ENCODE measurements at regions of chr4 and their contacts with region 1.

Region 1: GRCh38 chr4:145168581-145169187 is 11.7 kb downstream of the OTUD4 start:
- DNase-seq: no peak
- H3K4me3 ChIP-seq: no peak overlapping the region
- H3K27ac ChIP-seq: no peak overlapping the region
- H3K4me1 ChIP-seq: no peaks in the 10 kb centered on the region
- H3K27me3 ChIP-seq: no peaks in the 10 kb centered on the region
- CTCF ChIP-seq: no peak

Region 2: DNA sequence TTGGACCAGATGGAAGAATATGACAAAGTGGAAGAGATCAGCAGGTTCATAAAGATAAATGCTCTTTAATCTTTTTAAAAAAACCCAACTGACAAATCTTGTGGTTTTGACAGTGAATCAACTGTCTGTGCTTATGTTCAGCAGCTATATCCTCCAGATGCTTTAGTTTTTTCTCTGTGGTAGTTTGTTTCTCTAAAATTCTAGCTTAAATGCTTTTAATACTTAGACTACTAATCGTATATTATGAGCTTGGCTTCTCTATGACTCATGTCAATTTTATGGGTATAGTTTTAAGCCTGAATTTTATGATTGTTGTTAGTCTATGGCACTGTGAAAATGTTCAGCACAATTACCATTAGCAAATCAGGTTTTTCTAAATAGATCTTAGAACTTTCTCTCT is 509.8 kb before region 1 on chr4:
- intact Hi-C with region 1: no loop called
- DNase-seq: no peak
- H3K4me3 ChIP-seq: no peak overlapping the region
- H3K27ac ChIP-seq: no peak overlapping the region
- H3K4me1 ChIP-seq: no peaks in the 10 kb centered on the region
- H3K27me3 ChIP-seq: no peaks in the 10 kb centered on the region
- CTCF ChIP-seq: no peak

Region 3: DNA sequence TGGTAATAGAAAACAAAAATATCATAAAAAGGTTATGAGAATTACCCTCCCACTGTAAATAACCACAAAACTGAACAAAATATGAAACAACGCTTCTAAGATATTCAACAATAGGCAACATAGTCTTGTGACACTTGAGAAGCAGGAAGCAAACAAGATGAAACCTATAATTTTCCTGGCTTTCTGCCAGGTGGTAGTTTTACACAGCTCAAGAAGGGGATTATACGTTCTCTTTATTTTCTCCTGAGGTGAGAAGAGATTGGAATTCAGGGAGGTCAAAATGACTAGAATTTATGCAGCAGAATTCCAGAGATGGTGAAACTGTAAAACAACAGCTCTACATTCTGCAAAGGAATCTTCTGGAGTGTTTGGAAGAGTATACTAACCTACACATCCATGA is 336.7 kb before region 1 on chr4:
- intact Hi-C with region 1: no loop called
- DNase-seq: no peak
- H3K4me3 ChIP-seq: no peak overlapping the region
- H3K27ac ChIP-seq: no peak overlapping the region
- H3K4me1 ChIP-seq: no peaks in the 10 kb centered on the region
- H3K27me3 ChIP-seq: no peaks in the 10 kb centered on the region
- CTCF ChIP-seq: no peak

Region 4: DNA sequence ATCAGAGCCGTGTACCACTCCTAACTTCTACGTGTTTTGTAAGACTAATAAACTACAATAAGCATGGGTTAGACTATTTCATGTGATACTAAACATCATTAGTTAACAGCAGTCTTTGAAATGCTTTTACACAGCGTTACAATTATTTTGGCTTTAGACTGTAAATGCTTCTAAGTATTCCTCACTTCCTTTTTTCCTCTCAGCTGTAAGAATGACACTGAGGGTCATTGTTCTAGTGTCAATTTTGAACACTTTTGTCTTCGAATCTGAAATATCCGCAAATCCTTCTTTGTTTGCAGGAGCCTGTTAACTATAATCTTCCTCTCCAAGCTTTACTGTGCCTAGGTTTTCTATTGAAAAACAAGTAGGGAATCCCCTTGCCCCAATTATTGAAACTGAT is 69.0 kb before region 1 on chr4:
- intact Hi-C with region 1: loop called (anchors 10 kb)
- DNase-seq: no peak
- H3K4me3 ChIP-seq: no peak overlapping the region
- H3K27ac ChIP-seq: no peak overlapping the region
- H3K4me1 ChIP-seq: peaks cover 7% of the 10 kb centered on the region
- H3K27me3 ChIP-seq: no peaks in the 10 kb centered on the region
- CTCF ChIP-seq: no peak

Measured in colonic mucosa (tissue), 4 donors.